Right ventricle myocardium superior (tissue), 1 donor: ENCODE measurements at regions of chr1 and their contacts with region 1.

Region 1: DNA sequence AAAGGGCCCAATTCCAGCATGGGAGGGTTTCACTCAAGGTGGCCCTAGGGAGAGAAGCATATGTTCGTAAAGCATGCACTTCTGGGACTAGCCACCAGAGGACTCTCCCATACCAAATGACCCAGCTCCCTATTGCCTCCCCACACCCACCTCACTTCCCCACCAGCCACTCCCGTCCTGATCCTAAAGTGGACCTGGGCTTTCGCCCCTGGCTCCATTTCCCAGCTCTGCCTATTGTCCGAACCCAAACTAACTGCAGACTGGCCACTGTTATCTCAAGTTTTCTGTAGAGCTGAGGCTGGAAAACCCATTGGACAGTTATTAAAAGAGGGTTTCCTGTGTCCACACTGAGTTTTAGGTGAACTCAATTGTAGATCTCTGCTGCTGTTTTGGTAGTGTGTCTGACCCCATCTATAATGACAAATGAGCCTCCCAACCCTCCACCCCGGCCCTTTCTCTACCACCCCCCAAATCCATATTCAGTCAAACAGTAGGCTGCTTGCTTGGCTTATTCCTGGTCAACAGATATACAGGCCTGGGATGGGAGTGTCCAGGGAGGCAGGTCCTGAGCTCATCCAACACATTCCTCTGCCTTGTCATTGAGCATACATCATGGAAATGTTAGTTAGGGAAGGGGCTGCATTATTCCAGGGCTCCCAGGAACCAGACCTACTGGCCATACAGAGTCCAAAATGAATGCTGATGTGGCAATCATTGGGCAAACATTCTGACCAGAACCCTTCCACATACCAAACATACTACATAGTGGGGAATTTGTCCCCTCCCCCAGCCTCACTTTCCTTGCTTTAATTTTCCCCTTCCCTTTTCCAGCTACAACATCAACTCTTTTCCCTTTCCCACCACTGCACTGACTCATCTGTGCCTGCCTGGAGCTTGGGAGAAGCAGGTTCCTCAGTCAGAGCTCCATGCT is 59.2 kb downstream of the ABCA4 start:
- DNase-seq: peak; percentile 67
- ATAC-seq: peak; percentile 88

Region 2: DNA sequence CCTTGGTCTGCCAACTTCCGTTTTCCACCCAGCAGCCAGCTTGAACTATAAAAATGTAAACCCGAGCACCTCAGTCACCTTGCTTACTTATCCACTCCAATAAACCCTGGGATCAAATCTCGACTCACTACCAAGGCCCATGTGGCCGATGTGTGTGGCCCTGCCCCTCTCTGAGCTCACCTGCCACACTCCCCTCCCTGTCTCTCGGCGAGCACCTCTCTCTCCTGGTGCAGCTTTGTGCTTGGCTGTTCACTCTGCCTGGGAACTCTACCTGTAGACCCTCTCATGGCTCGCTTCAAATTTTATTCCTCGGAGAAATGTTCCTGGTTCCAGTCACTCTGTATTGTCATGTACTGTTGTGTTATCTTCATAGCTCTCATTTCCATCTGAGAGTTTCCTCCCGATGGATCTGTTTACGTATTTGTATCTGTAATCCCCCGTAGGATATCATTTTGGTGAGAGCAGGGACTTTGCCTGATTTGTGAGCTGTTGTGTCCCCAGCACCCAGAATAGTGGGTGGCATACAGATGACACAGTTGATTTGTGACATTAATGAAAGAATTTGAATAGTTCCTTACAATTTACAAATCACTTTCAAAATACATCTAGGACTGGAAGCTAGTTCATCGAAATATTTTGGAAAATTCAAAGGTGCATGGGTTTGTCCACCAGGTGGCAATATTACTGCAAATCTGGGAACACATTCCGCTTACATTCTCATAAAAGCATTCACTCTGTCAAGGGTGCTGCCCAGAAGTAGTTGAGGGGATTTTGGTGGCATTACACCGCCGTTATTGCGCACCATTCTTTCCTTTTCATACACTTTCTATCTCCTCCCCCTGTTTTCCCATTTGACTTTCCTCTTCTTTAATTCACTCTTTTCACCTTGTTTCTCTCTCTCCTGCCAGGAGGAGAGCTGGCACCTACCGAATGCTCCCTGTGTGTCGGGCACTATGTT is 36.1 kb before region 1 on chr1:
- intact Hi-C with region 1: loop called (anchors 2 kb)
- DNase-seq: no peak
- ATAC-seq: peak; percentile 63

Region 3: DNA sequence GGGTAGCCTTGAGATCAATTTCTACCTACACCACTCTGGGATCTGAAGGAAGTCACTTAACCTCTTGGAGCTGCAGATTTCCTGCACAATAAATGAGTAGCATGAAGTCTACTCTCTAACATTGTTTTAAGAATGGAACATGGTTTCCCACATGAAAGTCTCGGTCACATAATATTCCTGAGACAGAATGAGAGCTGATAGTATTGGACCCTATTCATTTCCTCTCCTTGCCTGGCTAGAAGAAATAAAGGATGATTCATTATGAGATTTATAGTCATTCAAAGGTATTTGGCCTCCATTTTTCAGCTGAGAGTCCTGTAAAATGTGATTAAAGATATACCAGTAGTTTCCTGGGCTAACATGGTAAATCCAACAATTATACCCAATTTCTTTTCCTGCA is 118.9 kb after region 1 on chr1:
- intact Hi-C with region 1: loop called (anchors 10 kb)
- DNase-seq: no peak
- ATAC-seq: no peak

Region 4: DNA sequence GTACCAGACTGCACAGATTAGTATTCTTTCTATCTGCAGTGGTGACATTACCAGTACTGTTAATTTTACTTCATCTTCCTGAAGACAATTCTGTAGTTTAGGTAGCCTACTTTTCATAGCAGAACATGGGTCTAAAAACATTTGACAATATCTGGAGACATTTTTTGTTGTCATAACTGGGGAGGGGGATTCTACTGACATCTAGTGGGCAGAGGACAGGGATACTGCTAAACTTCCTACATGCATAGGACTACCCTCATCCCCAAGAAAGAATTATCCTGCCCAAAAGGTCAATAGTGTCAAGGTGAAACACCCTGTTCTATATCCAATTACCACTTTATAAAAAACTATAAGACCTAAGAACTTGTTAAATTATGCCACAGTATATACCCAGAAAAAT is 179.0 kb after region 1 on chr1:
- intact Hi-C with region 1: loop called (anchors 5 kb)
- DNase-seq: no peak
- ATAC-seq: no peak

Region 5: DNA sequence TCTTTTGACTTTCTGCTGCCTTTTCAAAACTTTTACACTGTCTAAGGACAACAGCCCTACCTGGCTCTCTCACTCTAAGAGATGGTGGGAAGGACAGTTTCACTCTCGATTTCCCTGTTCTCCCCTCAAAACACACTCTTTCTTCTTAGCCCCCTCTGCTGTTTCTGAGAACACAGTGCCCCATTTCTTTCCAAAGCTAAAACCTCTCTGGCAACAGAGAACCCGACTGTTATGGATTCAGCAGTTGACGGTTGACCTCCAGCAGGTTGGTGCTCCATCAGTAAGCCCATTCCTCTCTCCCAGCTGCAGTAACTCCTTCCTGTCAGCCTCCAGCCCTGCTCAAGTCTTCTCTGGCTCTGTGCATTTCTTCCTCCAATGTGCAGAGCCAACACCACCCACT is 268.2 kb after region 1 on chr1:
- intact Hi-C with region 1: loop called (anchors 2 kb)
- DNase-seq: no peak
- ATAC-seq: peak; percentile 55

Region 6: DNA sequence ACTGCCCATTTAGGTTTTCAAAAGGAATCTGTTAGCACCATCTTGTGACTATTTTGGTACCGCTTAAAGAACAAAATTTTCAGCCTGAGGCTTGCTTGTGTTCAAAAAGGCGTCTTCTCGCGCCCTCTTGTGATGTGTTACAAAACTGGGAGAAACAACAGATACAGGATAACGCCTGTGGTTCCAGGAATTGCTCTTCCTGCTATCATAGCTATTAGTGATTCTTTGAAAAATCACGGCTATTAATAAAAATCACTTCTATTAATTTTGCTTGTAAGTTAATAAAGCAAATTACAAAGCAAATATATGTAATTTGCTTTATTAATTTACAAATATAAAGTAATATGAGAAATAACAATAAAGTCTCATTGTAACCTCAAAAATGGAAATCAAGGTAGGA is 274.2 kb after region 1 on chr1:
- intact Hi-C with region 1: loop called (anchors 2 kb)
- DNase-seq: peak; percentile 48
- ATAC-seq: peak; percentile 95